ENCODE measurements at regions of chr7 and their contacts with region 1.

Region 1: DNA sequence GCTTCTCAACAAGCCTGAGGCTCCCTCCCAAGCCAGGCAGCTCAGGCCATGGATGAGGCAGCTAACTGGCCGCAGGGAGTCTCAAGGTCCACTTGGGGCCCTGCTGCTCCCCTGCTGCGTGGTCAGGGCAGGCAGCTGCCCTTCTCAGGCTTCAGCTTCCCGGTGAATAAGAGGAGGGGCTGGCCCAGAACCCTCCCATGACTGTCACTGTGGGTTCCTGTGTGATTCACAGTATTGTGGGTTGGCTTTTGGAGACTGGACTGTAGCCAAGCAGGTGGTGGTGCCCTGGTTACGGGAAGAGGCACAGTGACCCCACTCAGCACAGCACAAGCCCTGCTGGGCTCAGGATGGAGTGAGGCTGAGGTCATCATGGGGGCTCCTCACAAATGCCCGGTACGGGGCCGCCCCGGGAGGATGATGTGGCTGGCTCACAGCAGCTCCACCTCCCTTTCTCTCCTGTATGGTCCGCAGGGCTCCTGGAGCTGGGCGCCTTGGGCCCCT is 189.8 kb downstream of the HECW1 start:
- DNase-seq: peak; percentile 56
- ATAC-seq: peak; percentile 72
- H3K4me3 Mint-ChIP-seq: no peak overlapping the region
- H3K27ac Mint-ChIP-seq: no peak overlapping the region
- H3K4me1 Mint-ChIP-seq: peaks cover 35% of the 10 kb centered on the region
- H3K27me3 Mint-ChIP-seq: peaks cover 8% of the 10 kb centered on the region

Region 2: DNA sequence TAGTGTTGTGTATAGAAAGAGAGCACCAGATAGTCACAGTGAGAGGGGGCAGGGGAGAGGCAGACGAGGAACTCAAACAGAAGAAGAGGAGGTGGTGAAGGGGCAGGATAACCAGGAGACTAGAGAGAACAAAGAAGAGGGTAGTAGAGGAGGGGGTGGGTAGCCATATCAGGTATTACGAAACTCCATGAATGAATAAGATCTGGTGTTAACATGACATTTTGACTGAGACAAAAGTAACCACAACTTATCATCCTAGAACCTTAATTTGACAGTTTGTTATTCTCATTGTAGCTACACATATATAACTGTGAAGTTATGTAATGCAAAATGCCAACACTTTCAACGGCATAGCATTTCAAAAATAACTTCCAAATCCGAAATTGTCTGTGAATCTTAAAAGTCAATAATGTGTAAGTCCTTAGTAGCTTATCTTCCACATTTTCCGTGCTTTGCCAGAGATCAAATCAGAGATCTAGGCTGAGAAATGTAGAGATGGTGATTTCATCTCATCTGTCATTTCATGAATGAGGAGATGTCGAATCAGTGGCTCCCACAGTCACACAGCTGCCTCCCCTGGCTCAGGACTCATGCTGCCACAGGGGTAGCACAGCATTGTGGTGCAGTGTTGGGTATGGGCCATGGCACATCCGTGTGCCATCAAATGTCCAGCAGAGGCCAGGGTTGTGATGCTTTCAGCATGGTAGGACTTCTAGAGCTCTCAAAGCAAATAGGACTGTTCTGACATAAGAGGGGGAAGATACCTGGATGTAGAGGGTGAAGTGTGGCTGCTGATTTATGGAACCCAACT is 12.3 kb after region 1 on chr7:
- CTCF ChIA-PET with region 1: interaction called, 7 read pairs
- POLR2A ChIA-PET with region 1: no interaction called
- intact Hi-C with region 1: loop called in 1 of 2 experiments (anchors 1 kb)
- DNase-seq: peak; percentile 65
- ATAC-seq: peak; percentile 88
- H3K4me3 Mint-ChIP-seq: peak overlapping the region; percentile 8
- H3K27ac Mint-ChIP-seq: no peak overlapping the region
- H3K4me1 Mint-ChIP-seq: peaks cover 17% of the 10 kb centered on the region
- H3K27me3 Mint-ChIP-seq: peaks cover 8% of the 10 kb centered on the region